ENCODE measurements at regions of chr11 and their contacts with region 1.

Region 1: DNA sequence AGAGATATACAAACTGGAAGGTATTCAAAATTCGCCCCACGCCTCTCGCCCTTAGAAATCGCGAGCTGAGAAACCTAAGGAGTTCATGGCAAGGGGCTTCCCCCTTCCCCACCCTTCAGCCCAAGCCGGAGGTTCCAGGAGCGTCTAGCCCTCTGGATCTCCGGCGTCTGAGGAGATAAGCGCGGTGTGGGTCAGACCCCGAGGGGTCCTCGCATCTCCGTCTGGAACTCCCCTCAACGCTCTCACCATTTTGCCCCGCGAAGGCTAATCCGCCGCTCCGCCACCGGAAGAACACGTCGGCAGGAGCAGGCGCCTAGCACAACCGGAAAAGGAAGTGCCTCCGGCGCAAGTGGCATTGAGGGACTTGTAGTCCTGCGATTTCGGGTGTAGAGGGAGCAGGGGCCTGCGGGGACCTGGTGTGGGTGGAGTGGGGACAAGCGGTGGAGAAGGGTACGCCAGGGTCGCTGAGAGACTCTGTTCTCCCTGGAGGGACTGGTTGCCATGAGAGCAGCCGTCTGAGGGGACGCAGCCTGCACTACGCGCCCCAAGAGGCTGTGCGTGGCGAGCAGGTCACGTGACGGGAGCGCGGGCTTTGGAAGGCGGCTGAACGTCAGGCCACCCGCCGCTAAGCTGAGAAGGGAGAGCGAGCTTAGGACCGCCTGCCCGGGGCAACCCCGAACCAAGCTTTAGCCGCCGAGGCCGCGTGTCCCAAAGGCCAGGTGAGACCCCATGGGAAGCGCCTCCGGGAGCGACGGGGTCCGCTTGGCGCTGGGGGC is at the starts of genes FEN1 and TMEM258:
- DNase-seq: peak; percentile 87 to 92 (median 91)
- H3K4me3 ChIP-seq: peak within 1 kb of the TSS; percentile 95 to 96
- H3K4me3 Mint-ChIP-seq: peak within 1 kb of the TSS; percentile 89 to 99 (median 94)
- H3K27ac ChIP-seq: peak within 1 kb of the TSS; percentile 98
- H3K27ac Mint-ChIP-seq: peak within 1 kb of the TSS; percentile 93 to 100 (median 99)
- H3K4me1 ChIP-seq: peaks cover 21% of the 10 kb centered on the region
- H3K4me1 Mint-ChIP-seq: peaks cover 12 to 56% (median 31%) of the 10 kb centered on the region in 4 donors
- H3K27me3 ChIP-seq: no peaks in the 10 kb centered on the region
- H3K27me3 Mint-ChIP-seq: no peaks in the 10 kb centered on the region
- total RNA-seq, gene FEN1: 7.4 to 8.0 TPM
- total RNA-seq, gene TMEM258: 113 to 117 TPM

Region 2: DNA sequence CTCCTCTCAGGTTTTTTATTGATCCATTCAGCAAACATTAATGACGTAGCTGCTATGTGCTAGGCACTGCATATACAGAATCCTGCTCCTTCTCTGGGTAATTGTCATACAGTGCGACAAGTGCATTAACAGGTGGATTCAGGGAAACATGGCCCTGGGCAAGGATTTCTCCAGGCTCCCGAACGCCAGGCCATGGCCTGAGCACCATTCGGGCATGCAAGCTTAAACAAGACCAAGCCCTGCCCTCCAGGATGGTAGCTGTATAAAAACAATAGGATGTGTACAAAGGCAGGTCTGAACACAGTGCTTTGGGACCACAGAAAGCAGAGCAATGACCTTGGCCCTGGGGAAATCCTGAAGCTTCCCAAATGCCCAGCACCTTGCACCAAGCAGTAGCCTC is 202.5 kb before region 1 on chr11:
- CTCF ChIA-PET with region 1: no interaction called
- POLR2A ChIA-PET with region 1: no interaction called
- intact Hi-C with region 1: no loop called
- DNase-seq: no peak
- H3K4me3 ChIP-seq: no peak overlapping the region
- H3K4me3 Mint-ChIP-seq: peak overlapping the region in 6 of 8 donors; percentile 3 to 59 (median 31)
- H3K27ac ChIP-seq: no peak overlapping the region
- H3K27ac Mint-ChIP-seq: no peak overlapping the region
- H3K4me1 ChIP-seq: peaks cover 14% of the 10 kb centered on the region
- H3K4me1 Mint-ChIP-seq: peaks cover 8 to 19% (median 11%) of the 10 kb centered on the region in 4 donors
- H3K27me3 ChIP-seq: peaks cover 7% of the 10 kb centered on the region
- H3K27me3 Mint-ChIP-seq: peaks cover 36 to 38% of the 10 kb centered on the region in 2 donors

Region 3: DNA sequence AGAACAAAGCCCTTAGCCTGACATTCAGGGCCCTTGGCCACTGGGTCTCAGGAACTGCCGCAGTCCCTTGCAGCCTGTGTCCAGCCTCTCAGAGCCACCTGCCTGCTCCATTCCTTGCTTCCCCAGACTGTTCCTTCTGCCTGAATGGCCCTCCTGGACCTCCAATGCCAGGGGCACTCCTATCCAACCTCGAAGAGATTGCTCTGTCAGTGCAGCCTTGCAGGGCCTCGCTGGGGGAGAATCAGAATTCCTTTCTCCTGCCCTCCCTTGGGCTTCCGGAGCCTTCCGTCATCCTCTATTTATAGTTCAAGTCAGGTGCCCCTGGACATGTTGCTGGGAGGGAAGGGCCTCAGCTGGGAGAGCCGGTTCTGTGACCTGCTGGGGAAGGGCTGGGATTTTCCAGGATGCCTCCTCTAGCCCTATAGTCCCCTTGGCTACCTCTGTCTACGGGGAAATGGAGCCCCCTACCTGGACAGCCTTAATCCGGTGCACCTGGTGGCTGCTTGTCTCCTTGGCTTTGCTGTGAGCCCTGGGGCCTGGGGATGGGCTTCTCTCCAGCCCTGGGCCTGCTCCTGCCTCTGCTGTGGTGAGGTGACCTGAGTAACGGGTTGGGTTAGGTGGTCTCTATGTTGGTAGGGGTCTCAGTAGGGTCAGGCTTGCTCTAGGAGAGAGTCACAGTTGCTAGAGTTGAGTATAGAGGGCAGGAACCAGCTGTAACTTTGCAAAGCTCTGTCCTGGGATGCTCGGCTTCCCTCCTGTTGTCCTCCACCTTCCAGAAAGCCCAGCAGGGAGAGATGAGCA is 165.7 kb before region 1 on chr11:
- CTCF ChIA-PET with region 1: no interaction called
- POLR2A ChIA-PET with region 1: no interaction called
- intact Hi-C with region 1: no loop called
- DNase-seq: no peak
- H3K4me3 ChIP-seq: no peak overlapping the region
- H3K4me3 Mint-ChIP-seq: no peak overlapping the region
- H3K27ac ChIP-seq: no peak overlapping the region
- H3K27ac Mint-ChIP-seq: no peak overlapping the region
- H3K4me1 ChIP-seq: no peaks in the 10 kb centered on the region
- H3K4me1 Mint-ChIP-seq: peaks cover 0 to 8% (median 0%) of the 10 kb centered on the region in 4 donors
- H3K27me3 ChIP-seq: no peaks in the 10 kb centered on the region
- H3K27me3 Mint-ChIP-seq: peaks cover 5 to 17% of the 10 kb centered on the region in 2 donors

Region 4: DNA sequence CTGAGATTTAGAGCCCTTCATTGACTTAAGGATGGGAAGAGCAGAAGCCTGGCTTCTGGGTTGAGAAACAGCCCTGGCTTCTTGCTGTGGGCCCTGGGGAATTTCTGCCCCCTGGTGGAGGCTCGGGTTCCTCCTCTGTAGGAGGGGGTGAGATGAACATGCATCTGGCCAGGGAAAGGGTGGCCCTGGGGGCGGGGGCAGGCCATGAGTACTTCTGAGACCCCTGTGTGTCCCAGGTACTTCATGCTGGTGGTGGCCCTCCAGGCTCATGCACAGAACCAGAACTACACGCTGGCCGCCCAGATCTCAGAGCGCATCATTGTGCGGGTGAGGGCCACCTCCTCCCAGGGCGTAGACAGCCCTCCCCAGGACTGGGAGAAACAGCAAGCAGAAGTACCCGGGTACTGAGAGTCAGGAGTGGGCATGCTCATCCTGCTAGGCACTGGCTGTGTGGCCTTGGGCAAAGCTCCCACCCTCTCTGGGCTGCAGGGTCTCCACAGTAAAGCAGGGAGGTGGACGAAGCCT is 15.9 kb before region 1 on chr11:
- CTCF ChIA-PET with region 1: interaction called, 6 read pairs
- POLR2A ChIA-PET with region 1: interaction called, 5 read pairs
- intact Hi-C with region 1: loop called (anchors 1 kb)
- DNase-seq: peak in 4 of 5 donors; percentile 31 to 47 (median 36)
- H3K4me3 ChIP-seq: peak overlapping the region in 1 of 2 donors; percentile 28
- H3K4me3 Mint-ChIP-seq: peak overlapping the region; percentile 26 to 82 (median 64)
- H3K27ac ChIP-seq: no peak overlapping the region
- H3K27ac Mint-ChIP-seq: peak overlapping the region in 4 of 7 donors; percentile 46 to 71 (median 65)
- H3K4me1 ChIP-seq: peaks cover 21% of the 10 kb centered on the region
- H3K4me1 Mint-ChIP-seq: peaks cover 6 to 33% (median 12%) of the 10 kb centered on the region in 4 donors
- H3K27me3 ChIP-seq: no peaks in the 10 kb centered on the region
- H3K27me3 Mint-ChIP-seq: no peaks in the 10 kb centered on the region

Region 5: DNA sequence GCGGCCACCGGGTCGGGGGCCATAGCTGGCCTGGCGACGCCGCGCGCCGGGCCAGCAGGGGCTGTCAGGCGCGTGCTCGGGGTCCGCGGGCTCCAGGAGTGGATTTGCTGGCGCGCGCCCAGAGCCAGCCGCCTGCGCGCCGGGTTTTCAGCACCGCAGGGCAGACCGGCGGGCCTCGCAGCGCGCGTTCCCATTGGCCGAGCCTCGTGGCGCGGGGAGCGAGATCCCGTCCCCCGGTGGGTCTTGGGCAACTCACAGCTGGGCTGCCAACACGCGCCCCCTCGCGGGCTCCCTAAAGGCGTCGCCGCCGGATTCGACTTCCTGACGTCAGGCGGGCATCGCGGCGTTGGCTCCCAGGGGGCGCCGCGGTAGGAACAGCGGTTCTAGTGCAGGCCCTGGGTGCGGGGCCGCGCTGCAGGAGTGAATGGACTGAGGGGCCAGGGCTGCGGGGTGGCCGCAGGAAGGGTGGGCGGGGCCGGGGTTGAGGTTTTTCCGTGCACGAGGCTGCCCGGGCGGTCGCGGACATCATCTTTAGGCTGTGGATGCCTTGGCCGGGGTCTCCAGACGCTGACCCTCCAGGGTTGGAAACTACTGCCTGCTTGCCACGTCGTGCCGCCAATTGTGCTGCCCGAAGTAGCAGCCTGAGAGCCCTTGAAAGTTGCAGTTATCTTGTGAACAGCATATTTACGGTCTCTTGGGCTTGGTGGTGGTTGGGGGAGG is 24.4 kb after region 1 on chr11 and contains the start of gene FADS1:
- CTCF ChIA-PET with region 1: interaction called, 95 read pairs
- POLR2A ChIA-PET with region 1: interaction called, 28 read pairs
- intact Hi-C with region 1: loop called (anchors 1 kb)
- DNase-seq: peak; percentile 54 to 79 (median 68)
- H3K4me3 ChIP-seq: peak within 1 kb of the TSS; percentile 73 to 77
- H3K4me3 Mint-ChIP-seq: peak within 1 kb of the TSS; percentile 84 to 97 (median 92)
- H3K27ac ChIP-seq: peak within 1 kb of the TSS; percentile 34
- H3K27ac Mint-ChIP-seq: peak within 1 kb of the TSS; percentile 5 to 96 (median 83)
- H3K4me1 ChIP-seq: peaks cover 21% of the 10 kb centered on the region
- H3K4me1 Mint-ChIP-seq: peaks cover 3 to 18% (median 7%) of the 10 kb centered on the region in 4 donors
- H3K27me3 ChIP-seq: peaks cover 10% of the 10 kb centered on the region
- H3K27me3 Mint-ChIP-seq: peaks cover 4 to 19% of the 10 kb centered on the region in 2 donors
- total RNA-seq, gene FADS1: 1.7 to 2.2 TPM

Region 6: DNA sequence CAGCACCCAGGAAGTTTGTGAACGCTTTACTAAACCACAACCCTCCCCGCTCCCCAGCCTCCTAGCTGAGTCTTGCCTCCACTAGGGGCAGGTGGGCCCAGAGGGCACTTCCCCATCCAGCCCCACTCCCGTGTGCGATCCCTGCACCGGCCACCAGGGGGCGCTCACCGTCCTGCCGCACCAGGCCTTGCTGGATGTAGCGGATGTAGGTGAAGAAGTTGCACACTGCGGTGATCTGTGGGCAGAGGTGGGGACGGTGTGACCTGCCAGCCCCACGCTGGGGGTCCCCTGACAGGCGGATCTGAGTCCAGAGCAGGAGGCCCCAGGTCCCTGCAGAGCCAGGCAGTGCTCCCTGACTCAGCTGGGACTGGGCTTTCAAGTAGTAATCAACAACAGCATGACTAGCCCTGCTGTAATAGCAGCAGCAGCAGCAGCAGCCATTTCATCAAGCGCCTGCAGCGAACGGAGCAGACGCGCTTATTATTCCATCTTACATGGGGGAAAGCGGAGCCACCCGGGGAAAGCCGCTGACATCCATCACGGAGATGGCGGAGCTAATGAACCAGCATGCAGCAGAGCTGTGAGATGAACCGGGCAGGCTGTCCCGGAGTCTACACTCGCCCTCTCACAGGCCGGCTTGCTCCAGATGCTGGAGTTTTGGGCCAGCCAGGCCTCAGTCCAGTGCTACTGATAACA is 106.8 kb after region 1 on chr11:
- CTCF ChIA-PET with region 1: interaction called, 45 read pairs
- POLR2A ChIA-PET with region 1: no interaction called
- intact Hi-C with region 1: loop called (anchors 1 kb)
- DNase-seq: peak; percentile 89 to 92 (median 90)
- H3K4me3 ChIP-seq: no peak overlapping the region
- H3K4me3 Mint-ChIP-seq: peak overlapping the region in 1 of 8 donors; percentile 4
- H3K27ac ChIP-seq: no peak overlapping the region
- H3K27ac Mint-ChIP-seq: peak overlapping the region in 6 of 7 donors; percentile 2 to 93 (median 76)
- H3K4me1 ChIP-seq: peaks cover 7% of the 10 kb centered on the region
- H3K4me1 Mint-ChIP-seq: peaks cover 4 to 6% (median 5%) of the 10 kb centered on the region in 4 donors
- H3K27me3 ChIP-seq: no peaks in the 10 kb centered on the region
- H3K27me3 Mint-ChIP-seq: no peaks in the 10 kb centered on the region

Region 7: DNA sequence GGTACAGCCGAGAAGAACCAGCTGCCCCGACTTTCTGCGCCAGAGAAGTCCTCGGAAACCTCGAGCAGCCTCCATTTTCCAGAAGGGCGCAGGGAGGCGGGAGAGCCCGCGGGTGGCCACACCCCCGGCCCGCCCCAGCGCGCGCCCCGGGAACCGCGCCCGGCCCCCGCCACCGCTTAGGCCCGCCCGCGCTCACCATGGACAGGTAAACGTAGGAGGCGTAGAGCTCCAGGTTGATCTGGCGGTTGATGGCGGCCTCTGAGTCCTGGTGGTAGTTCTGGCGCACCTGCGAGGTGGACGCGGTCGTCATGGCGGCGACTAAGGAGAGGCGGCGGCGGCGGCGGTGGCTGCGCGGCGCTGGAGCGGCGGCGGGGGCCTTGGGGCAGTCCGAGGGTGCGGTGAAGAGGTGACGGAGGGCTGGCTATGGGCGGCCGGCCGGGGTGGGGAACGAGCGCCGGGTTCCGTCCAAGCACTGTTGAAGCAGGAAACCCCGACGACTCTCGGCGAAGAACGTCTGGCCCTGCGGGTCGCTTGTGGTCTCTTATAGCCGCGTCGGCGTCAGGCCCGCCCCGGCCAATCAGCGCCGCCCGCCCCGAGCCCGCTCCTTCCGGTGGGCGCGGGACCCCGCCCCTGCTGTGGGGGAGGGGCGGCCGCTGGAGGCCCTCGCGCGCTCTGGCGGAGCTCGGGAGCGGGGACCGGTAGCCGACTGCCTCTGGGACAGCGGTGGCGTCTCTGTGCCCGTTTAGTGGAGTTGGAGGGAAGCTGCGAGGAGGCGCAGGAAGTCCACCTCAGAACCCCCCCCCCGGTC is 174.8 kb after region 1 on chr11 and contains the start of gene FTH1:
- CTCF ChIA-PET with region 1: interaction called, 6 read pairs
- POLR2A ChIA-PET with region 1: interaction called, 22 read pairs
- intact Hi-C with region 1: loop called (anchors 1 kb)
- DNase-seq: peak; percentile 91 to 95 (median 92)
- H3K4me3 ChIP-seq: peak within 1 kb of the TSS; percentile 99 to 100
- H3K4me3 Mint-ChIP-seq: peak within 1 kb of the TSS; percentile 92 to 97 (median 95)
- H3K27ac ChIP-seq: peak within 1 kb of the TSS; percentile 89
- H3K27ac Mint-ChIP-seq: peak within 1 kb of the TSS; percentile 90 to 99 (median 98)
- H3K4me1 ChIP-seq: peaks cover 38% of the 10 kb centered on the region
- H3K4me1 Mint-ChIP-seq: peaks cover 36 to 74% (median 50%) of the 10 kb centered on the region in 4 donors
- H3K27me3 ChIP-seq: no peaks in the 10 kb centered on the region
- H3K27me3 Mint-ChIP-seq: no peaks in the 10 kb centered on the region
- total RNA-seq, gene FTH1: 695 to 763 TPM

Region 8: GRCh38 chr11:62054484-62055121 is 262.1 kb after region 1 on chr11:
- CTCF ChIA-PET with region 1: no interaction called
- POLR2A ChIA-PET with region 1: no interaction called
- intact Hi-C with region 1: loop called (anchors 1 kb)
- DNase-seq: peak; percentile 11 to 53 (median 36)
- H3K4me3 ChIP-seq: no peak overlapping the region
- H3K4me3 Mint-ChIP-seq: no peak overlapping the region
- H3K27ac ChIP-seq: no peak overlapping the region
- H3K27ac Mint-ChIP-seq: peak overlapping the region in 1 of 7 donors; percentile 29
- H3K4me1 ChIP-seq: no peaks in the 10 kb centered on the region
- H3K4me1 Mint-ChIP-seq: no peaks in the 10 kb centered on the region
- H3K27me3 ChIP-seq: no peaks in the 10 kb centered on the region
- H3K27me3 Mint-ChIP-seq: peaks cover 0 to 3% of the 10 kb centered on the region in 2 donors

Region 9: GRCh38 chr11:62123669-62124185 is 331.2 kb after region 1 on chr11 and contains the start of gene INCENP:
- CTCF ChIA-PET with region 1: no interaction called
- POLR2A ChIA-PET with region 1: no interaction called
- intact Hi-C with region 1: loop called (anchors 1 kb)
- DNase-seq: peak; percentile 92 to 98 (median 96)
- H3K4me3 ChIP-seq: peak within 1 kb of the TSS; percentile 88 to 96
- H3K4me3 Mint-ChIP-seq: peak within 1 kb of the TSS; percentile 93 to 98 (median 95)
- H3K27ac ChIP-seq: peak within 1 kb of the TSS; percentile 82
- H3K27ac Mint-ChIP-seq: peak within 1 kb of the TSS; percentile 86 to 95 (median 92)
- H3K4me1 ChIP-seq: peaks cover 23% of the 10 kb centered on the region
- H3K4me1 Mint-ChIP-seq: peaks cover 15 to 42% (median 27%) of the 10 kb centered on the region in 4 donors
- H3K27me3 ChIP-seq: no peaks in the 10 kb centered on the region
- H3K27me3 Mint-ChIP-seq: peaks cover 0 to 2% of the 10 kb centered on the region in 2 donors
- total RNA-seq, gene INCENP: 28.4 to 32.1 TPM